Activated T-helper 1 cell treated with anti-CD3 and anti-CD28 coated beads, Interleukin-12 subunit alpha, Interleukin-12 subunit beta, Interleukin-2, Interleukin-4 antibody, amounts not matched to agents 30 ng/mL and 10 ng/mL and 1 ng/mL, durations not matched to agents 14 hours and 24 hours and 36 hours (primary cell): ENCODE measurements at regions of chr14 and their contacts with region 1.

Region 1: GRCh38 chr14:67285876-67286452 is 44.7 kb downstream of the PALS1 start:
- DNase-seq: no peak
- H3K4me3 Mint-ChIP-seq: no peak overlapping the region
- H3K27ac Mint-ChIP-seq: no peak overlapping the region
- H3K4me1 Mint-ChIP-seq: no peaks in the 10 kb centered on the region
- H3K27me3 Mint-ChIP-seq: no peaks in the 10 kb centered on the region

Region 2: DNA sequence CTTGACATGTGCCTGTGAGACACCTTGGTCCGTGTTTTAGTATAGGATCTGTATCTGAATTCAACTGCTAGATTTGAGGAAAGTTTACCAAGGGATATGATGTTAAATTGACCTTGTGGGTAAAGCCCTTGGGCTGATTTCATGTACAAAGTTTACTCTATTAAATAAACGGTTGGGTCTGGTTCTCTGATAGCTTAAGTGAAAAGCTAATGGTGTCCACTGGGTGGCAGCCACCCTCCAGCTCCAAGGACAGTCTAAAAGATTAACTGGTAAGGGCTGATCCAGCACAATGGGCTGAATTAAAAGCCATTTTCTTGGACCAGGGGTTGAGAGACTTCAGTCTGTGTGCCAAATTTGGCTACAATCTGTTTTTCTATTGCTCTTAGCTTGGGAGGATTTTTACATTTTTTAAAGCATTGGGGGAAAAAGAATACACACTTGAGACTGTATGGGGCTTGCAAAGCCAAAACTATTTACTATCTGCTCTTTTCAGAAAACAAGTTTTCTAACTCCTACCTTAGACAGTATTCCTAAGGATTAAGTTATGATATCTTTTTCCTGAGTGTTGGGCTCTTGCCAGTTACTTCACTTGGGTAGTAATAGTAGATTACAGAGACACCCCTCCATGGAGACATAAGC is 661.5 kb before region 1 on chr14:
- intact Hi-C with region 1: loop called (anchors 2 kb)
- DNase-seq: no peak
- H3K4me3 Mint-ChIP-seq: no peak overlapping the region
- H3K27ac Mint-ChIP-seq: no peak overlapping the region
- H3K4me1 Mint-ChIP-seq: peaks cover 4% of the 10 kb centered on the region
- H3K27me3 Mint-ChIP-seq: no peaks in the 10 kb centered on the region

Region 3: GRCh38 chr14:66955159-66955558 is 330.8 kb before region 1 on chr14:
- intact Hi-C with region 1: no loop called
- DNase-seq: no peak
- H3K4me3 Mint-ChIP-seq: no peak overlapping the region
- H3K27ac Mint-ChIP-seq: no peak overlapping the region
- H3K4me1 Mint-ChIP-seq: no peaks in the 10 kb centered on the region
- H3K27me3 Mint-ChIP-seq: no peaks in the 10 kb centered on the region

Region 4: GRCh38 chr14:67269298-67270061 is 16.5 kb before region 1 on chr14:
- intact Hi-C with region 1: no loop called
- DNase-seq: no peak
- H3K4me3 Mint-ChIP-seq: no peak overlapping the region
- H3K27ac Mint-ChIP-seq: no peak overlapping the region
- H3K4me1 Mint-ChIP-seq: peaks cover 9% of the 10 kb centered on the region
- H3K27me3 Mint-ChIP-seq: no peaks in the 10 kb centered on the region

Region 5: GRCh38 chr14:67319142-67319541 is 33.2 kb after region 1 on chr14:
- intact Hi-C with region 1: no loop called
- DNase-seq: no peak
- H3K4me3 Mint-ChIP-seq: no peak overlapping the region
- H3K27ac Mint-ChIP-seq: no peak overlapping the region
- H3K4me1 Mint-ChIP-seq: no peaks in the 10 kb centered on the region
- H3K27me3 Mint-ChIP-seq: no peaks in the 10 kb centered on the region